ENCODE measurements at regions of chr22 and their contacts with region 1.

Region 1: DNA sequence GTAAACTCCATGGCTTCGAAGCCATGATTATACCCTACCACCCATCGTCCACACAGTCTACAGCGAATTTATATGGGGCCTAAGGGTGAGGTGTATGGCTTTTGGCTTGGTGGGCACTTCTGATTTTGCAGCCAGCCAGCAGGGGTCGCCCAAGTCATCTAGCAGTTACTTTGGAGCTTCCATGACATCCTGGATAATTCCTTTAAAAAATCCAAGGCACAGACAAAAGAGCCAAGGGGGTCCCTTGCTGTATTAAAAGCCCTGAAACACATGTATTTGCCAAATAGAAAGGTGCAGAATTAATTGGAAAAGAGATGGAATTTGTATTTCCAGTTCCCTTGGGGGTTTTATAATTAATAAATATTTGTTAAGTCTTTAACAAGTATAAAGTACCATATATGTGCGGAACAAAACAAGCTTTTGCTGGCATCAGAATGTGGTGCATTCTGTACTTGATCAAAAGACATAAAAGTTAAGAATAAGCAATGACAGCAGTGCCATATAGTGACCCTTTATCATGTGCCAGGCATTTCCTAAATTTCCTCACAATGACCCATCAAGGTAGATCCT is 132.8 kb upstream of the PITPNB start:
- DNase-seq: peak; percentile 85
- ATAC-seq: peak; percentile 86
- H3K4me3 Mint-ChIP-seq: no peak overlapping the region
- H3K27ac Mint-ChIP-seq: no peak overlapping the region
- H3K4me1 Mint-ChIP-seq: peaks cover 3% of the 10 kb centered on the region
- H3K27me3 Mint-ChIP-seq: no peaks in the 10 kb centered on the region
- CTCF ChIP-seq: peak; percentile 76

Region 2: DNA sequence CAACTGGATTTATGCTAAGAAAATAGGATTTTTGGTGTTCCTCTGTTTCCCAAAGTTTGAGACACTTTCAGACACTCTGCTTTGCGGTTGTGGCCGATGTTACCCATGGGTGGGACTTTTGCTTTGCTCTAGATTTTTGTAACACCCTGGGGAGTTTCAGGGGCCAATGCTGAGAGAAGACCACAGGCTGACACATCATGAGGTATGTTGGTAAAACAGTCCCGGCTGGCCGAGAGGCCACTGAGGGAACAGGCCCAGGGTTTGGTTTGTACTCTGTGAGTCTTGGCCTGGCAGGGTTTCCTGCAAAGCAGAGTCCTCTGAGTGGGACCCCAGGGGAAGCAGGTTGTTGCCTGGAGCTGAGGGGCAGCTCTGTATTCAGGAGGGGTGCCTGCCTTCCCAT is 54.3 kb before region 1 on chr22:
- CTCF ChIA-PET with region 1: no interaction called
- POLR2A ChIA-PET with region 1: no interaction called
- DNase-seq: no peak
- ATAC-seq: no peak
- H3K4me3 Mint-ChIP-seq: no peak overlapping the region
- H3K27ac Mint-ChIP-seq: no peak overlapping the region
- H3K4me1 Mint-ChIP-seq: peaks cover 4% of the 10 kb centered on the region
- H3K27me3 Mint-ChIP-seq: no peaks in the 10 kb centered on the region
- CTCF ChIP-seq: no peak

Region 3: DNA sequence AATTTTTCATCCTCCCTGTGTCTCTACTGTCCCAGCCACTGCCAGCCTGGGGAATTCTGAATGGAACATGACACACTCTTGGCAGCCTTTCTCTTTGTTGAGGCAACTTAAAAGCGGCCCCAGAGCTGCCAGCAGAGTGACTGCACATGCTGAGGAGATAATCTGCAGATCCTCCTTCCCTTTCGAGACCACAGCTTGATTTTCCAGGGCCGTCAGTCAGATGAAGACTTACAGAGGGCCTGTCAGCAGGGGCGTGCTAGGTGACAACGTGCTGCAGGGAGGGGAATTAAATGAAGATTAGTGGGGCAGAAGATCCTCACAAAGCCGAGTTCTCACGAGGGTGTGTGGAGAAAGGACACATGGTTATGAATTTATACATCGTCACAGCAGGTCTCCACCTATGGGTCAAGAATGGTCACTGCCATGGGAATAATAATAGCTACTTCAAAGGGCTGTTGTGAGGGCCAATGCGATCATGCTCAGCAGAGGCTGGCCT is 60.7 kb after region 1 on chr22:
- CTCF ChIA-PET with region 1: interaction called, 12 read pairs
- POLR2A ChIA-PET with region 1: no interaction called
- DNase-seq: no peak
- ATAC-seq: peak; percentile 65
- H3K4me3 Mint-ChIP-seq: no peak overlapping the region
- H3K27ac Mint-ChIP-seq: no peak overlapping the region
- H3K4me1 Mint-ChIP-seq: peaks cover 35% of the 10 kb centered on the region
- H3K27me3 Mint-ChIP-seq: peaks cover 3% of the 10 kb centered on the region; the same call in 1 of the 2 replicates
- CTCF ChIP-seq: 0 out of 2 replicates have a peak, but pooled peaks have one; percentile 21

Region 4: GRCh38 chr22:28252539-28252938 is 200.7 kb after region 1 on chr22:
- CTCF ChIA-PET with region 1: interaction called, 22 read pairs
- POLR2A ChIA-PET with region 1: no interaction called
- DNase-seq: no peak
- ATAC-seq: no peak
- H3K4me3 Mint-ChIP-seq: no peak overlapping the region
- H3K27ac Mint-ChIP-seq: no peak overlapping the region
- H3K4me1 Mint-ChIP-seq: no peaks in the 10 kb centered on the region; the same call in 1 of the 2 replicates
- H3K27me3 Mint-ChIP-seq: peaks cover 17% of the 10 kb centered on the region
- CTCF ChIP-seq: no peak

Region 5: GRCh38 chr22:28442264-28442710 is 390.4 kb after region 1 on chr22:
- CTCF ChIA-PET with region 1: interaction called, 38 read pairs
- POLR2A ChIA-PET with region 1: no interaction called
- DNase-seq: peak; percentile 85
- ATAC-seq: peak; percentile 85
- H3K4me3 Mint-ChIP-seq: peak overlapping the region; percentile 96
- H3K27ac Mint-ChIP-seq: 0 out of 2 replicates have a peak overlapping the region, but pooled peaks have one; percentile 33
- H3K4me1 Mint-ChIP-seq: peaks cover 10% of the 10 kb centered on the region
- H3K27me3 Mint-ChIP-seq: no peaks in the 10 kb centered on the region
- CTCF ChIP-seq: peak; percentile 41; the same call in 1 of the 2 replicates

Region 6: GRCh38 chr22:28594076-28594796 is 542.4 kb after region 1 on chr22:
- CTCF ChIA-PET with region 1: interaction called, 18 read pairs
- POLR2A ChIA-PET with region 1: no interaction called
- DNase-seq: no peak
- ATAC-seq: no peak; the same call in 1 of the 2 replicates
- H3K4me3 Mint-ChIP-seq: no peak overlapping the region
- H3K27ac Mint-ChIP-seq: no peak overlapping the region
- H3K4me1 Mint-ChIP-seq: no peaks in the 10 kb centered on the region
- H3K27me3 Mint-ChIP-seq: no peaks in the 10 kb centered on the region
- CTCF ChIP-seq: no peak

Region 7: DNA sequence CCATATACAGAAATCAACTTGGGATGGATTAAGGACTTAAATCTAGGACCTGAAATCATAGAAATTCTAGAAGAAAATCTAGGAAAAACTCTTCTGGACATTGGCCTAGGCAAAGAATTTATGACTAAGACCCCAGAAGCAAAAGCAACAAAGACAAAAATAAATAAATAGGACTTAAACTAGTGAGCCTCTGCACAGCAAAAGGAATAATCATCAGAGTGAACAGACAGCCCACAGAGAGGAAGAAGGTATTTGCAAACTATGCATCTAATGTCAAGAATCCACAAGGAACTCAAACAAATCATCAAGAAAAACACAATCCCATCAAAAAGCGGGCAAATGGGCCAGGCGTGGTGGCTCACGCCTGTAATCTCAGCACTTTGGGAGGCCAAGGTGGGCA is 595.3 kb after region 1 on chr22:
- CTCF ChIA-PET with region 1: no interaction called
- POLR2A ChIA-PET with region 1: no interaction called
- DNase-seq: no peak
- ATAC-seq: no peak
- H3K4me3 Mint-ChIP-seq: no peak overlapping the region
- H3K27ac Mint-ChIP-seq: no peak overlapping the region
- H3K4me1 Mint-ChIP-seq: peaks cover 11% of the 10 kb centered on the region
- H3K27me3 Mint-ChIP-seq: no peaks in the 10 kb centered on the region
- CTCF ChIP-seq: no peak

Measured in WTC11 (cell line).